Spleen (tissue), 13 donors: ENCODE measurements at regions of chr6 and their contacts with region 1.

Region 1: GRCh38 chr6:30483677-30484279 is 5.5 kb upstream of the HLA-E start:
- DNase-seq: no peak
- H3K4me3 ChIP-seq: no peak overlapping the region
- H3K27ac ChIP-seq: peak overlapping the region in 3 of 8 donors; percentile 20 to 47 (median 38)
- H3K4me1 ChIP-seq: peaks cover 20 to 46% (median 30%) of the 10 kb centered on the region in 6 donors
- H3K27me3 ChIP-seq: peaks cover 4 to 42% (median 30%) of the 10 kb centered on the region in 7 donors
- CTCF ChIP-seq: peak; percentile 32 to 84 (median 66)
- POLR2A ChIP-seq: no peak

Region 2: DNA sequence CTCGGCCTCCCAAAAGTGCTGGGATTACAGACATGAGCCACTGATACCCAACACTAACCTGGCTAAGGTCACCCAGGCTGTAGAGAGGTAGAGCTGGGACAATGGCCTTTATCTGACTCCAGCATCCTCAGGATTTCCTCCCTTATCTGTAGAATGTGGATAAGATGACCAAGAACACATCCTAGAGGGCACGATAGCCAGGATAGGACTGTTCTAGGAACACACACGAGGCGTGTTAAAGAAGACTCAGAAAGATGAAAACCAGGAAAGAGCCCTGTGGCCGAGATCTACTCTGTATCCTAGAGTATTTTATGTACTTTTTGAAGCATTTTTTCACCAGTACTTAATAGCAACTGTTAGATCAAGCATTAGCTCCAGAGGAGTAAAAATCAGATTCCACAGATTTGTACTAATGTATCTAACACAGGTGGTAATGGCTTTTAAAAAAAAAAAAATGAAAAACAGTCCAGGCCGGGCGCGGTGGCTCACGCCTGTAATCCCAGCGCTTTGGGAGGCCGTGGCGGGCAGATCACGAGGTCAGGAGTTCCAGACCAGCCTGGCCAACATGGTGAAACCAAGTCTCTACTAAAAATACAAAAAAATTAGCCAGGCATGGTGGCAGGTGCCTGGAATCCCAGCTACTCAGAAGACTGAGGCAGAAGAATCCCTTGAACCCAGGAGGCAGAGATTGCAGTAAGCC is 116.0 kb after region 1 on chr6:
- intact Hi-C with region 1: loop called (anchors 5 kb)
- DNase-seq: no peak
- H3K4me3 ChIP-seq: no peak overlapping the region
- H3K27ac ChIP-seq: peak overlapping the region in 1 of 8 donors; percentile 24
- H3K4me1 ChIP-seq: peaks cover 0 to 54% (median 16%) of the 10 kb centered on the region in 6 donors
- H3K27me3 ChIP-seq: no peaks in the 10 kb centered on the region
- CTCF ChIP-seq: no peak
- POLR2A ChIP-seq: no peak

Region 3: GRCh38 chr6:30656513-30656912 is 172.7 kb after region 1 on chr6:
- intact Hi-C with region 1: no loop called
- DNase-seq: no peak
- H3K4me3 ChIP-seq: no peak overlapping the region
- H3K27ac ChIP-seq: peak overlapping the region in 1 of 8 donors; percentile 5
- H3K4me1 ChIP-seq: peaks cover 0 to 13% (median 0%) of the 10 kb centered on the region in 6 donors
- H3K27me3 ChIP-seq: no peaks in the 10 kb centered on the region
- CTCF ChIP-seq: no peak
- POLR2A ChIP-seq: no peak